ENCODE measurements at regions of chr4 and their contacts with region 1.

Region 1: DNA sequence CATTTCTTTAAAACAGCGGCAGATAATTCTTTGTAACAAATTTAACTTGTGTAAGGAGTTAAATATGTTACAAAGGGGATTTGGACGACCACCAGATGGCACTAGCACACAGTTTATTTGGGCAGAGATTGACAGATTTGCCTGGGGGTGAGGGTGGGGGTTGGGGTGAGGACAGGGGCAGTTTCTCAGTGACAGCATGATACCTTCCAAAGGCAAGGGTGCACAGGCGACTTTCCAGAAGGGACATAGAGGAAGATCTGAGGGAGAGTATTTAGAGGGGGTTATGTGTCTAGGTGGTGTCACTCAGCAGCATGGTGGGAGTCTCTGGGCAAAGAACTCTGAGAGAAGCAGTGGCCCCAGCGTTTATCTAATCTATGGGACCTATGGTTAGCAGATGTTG is 9.6 kb upstream of the TMA16 start:
- DNase-seq: peak; percentile 80
- ATAC-seq: peak; percentile 82
- H3K4me3 ChIP-seq: no peak overlapping the region
- H3K4me3 Mint-ChIP-seq: no peak overlapping the region
- H3K27ac ChIP-seq: no peak overlapping the region
- H3K27ac Mint-ChIP-seq: no peak overlapping the region
- H3K4me1 ChIP-seq: peaks cover 18 to 27% of the 10 kb centered on the region in 2 donors
- H3K4me1 Mint-ChIP-seq: peaks cover 7% of the 10 kb centered on the region
- H3K27me3 ChIP-seq: no peaks in the 10 kb centered on the region
- H3K27me3 Mint-ChIP-seq: no peaks in the 10 kb centered on the region
- CTCF ChIP-seq: peak; percentile 88

Region 2: GRCh38 chr4:163673848-163674697 is 189.2 kb after region 1 on chr4:
- CTCF ChIA-PET with region 1: interaction called, 5 read pairs
- POLR2A ChIA-PET with region 1: no interaction called
- intact Hi-C with region 1: loop called (anchors 2 kb)
- DNase-seq: peak; percentile 64
- ATAC-seq: peak; percentile 83
- H3K4me3 ChIP-seq: peak overlapping the region in 3 of 5 experiments; percentile 0 to 34 (median 12)
- H3K4me3 Mint-ChIP-seq: peak overlapping the region; percentile 78
- H3K27ac ChIP-seq: peak overlapping the region; percentile 34 to 83
- H3K27ac Mint-ChIP-seq: peak overlapping the region; percentile 92
- H3K4me1 ChIP-seq: peaks cover 26 to 50% of the 10 kb centered on the region in 2 donors
- H3K4me1 Mint-ChIP-seq: peaks cover 48% of the 10 kb centered on the region
- H3K27me3 ChIP-seq: no peaks in the 10 kb centered on the region
- H3K27me3 Mint-ChIP-seq: no peaks in the 10 kb centered on the region
- CTCF ChIP-seq: no peak

Region 3: DNA sequence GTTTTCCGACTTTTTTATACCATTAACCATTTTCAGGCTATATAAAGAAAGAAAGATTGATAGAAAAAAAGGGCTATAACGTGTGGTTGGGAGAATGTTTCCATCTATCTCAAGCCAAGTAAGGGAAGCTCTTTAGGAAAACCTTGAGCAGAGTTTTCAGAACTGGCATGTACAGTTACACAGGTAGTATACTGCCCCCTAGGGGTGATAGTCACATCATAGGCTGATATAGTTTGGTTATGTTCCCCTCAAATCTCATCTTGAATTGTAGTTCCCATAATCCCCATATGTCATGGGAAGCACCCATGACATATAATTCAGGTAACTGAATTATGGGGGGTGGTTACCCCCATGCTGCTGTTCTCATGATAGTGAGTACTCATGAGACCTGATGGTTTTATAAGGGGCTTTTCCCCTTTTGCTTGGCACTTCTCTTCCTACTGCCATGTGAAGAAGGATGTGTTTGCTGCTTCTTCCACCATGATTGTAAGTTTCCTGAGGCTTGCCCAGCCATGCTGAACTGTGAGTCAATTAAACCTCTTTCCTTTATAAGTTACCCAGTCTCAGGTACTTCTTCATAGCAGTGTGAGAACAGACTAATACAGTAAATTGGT is 196.4 kb after region 1 on chr4:
- CTCF ChIA-PET with region 1: interaction called, 6 read pairs
- POLR2A ChIA-PET with region 1: no interaction called
- intact Hi-C with region 1: loop called (anchors 2 kb)
- DNase-seq: peak; percentile 80
- ATAC-seq: peak; percentile 85
- H3K4me3 ChIP-seq: no peak overlapping the region
- H3K4me3 Mint-ChIP-seq: no peak overlapping the region
- H3K27ac ChIP-seq: no peak overlapping the region
- H3K27ac Mint-ChIP-seq: peak overlapping the region; percentile 74
- H3K4me1 ChIP-seq: peaks cover 6 to 11% of the 10 kb centered on the region in 2 donors
- H3K4me1 Mint-ChIP-seq: peaks cover 24% of the 10 kb centered on the region
- H3K27me3 ChIP-seq: no peaks in the 10 kb centered on the region
- H3K27me3 Mint-ChIP-seq: no peaks in the 10 kb centered on the region
- CTCF ChIP-seq: peak; percentile 87

Region 4: GRCh38 chr4:164012396-164013027 is 527.6 kb after region 1 on chr4:
- CTCF ChIA-PET with region 1: interaction called, 3 read pairs
- POLR2A ChIA-PET with region 1: no interaction called
- intact Hi-C with region 1: loop called (anchors 2 kb)
- DNase-seq: peak; percentile 28
- ATAC-seq: no peak
- H3K4me3 ChIP-seq: no peak overlapping the region
- H3K4me3 Mint-ChIP-seq: no peak overlapping the region
- H3K27ac ChIP-seq: no peak overlapping the region
- H3K27ac Mint-ChIP-seq: no peak overlapping the region
- H3K4me1 ChIP-seq: no peaks in the 10 kb centered on the region
- H3K4me1 Mint-ChIP-seq: no peaks in the 10 kb centered on the region
- H3K27me3 ChIP-seq: peaks cover 0 to 4% (median 0%) of the 10 kb centered on the region in 4 experiments
- H3K27me3 Mint-ChIP-seq: no peaks in the 10 kb centered on the region
- CTCF ChIP-seq: peak; percentile 27

Measured in B cell (primary cell).